ENCODE measurements at regions of chr7 and their contacts with region 1.

Region 1: DNA sequence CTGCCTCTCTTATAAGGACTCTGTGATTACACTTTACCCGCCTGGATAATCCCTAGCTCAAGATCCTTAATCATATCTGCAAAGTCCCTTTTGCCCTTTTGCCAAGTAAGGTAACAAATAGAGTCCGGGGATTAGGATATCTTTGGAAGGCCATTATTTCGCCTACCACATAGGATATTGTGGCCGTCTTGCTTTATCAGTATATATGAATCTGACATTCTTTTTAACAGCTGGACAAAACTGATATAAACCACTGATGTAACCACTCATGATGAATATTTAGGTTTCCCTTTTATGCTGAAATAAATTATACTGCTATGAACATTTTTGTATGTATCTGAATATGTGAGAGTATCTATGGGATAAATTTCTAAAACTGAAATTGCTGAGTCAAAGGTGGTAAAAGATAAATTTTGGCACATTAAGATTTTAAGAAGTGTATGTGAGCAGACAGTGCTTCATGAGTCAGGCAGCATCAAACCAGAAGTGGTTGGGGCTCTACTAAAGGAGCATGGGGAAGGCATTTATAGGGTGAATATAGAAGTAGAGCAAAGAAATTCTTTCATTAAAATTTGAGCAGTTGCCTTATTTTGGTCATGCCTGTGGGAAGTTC is 44.7 kb downstream of the AVL9 start:
- DNase-seq: no peak
- H3K4me3 ChIP-seq: no peak overlapping the region
- H3K27ac ChIP-seq: 0 out of 2 replicates have a peak overlapping the region, but pooled peaks have one; percentile 1
- H3K4me1 ChIP-seq: no peaks in the 10 kb centered on the region
- H3K27me3 ChIP-seq: no peaks in the 10 kb centered on the region
- CTCF ChIP-seq: no peak

Region 2: DNA sequence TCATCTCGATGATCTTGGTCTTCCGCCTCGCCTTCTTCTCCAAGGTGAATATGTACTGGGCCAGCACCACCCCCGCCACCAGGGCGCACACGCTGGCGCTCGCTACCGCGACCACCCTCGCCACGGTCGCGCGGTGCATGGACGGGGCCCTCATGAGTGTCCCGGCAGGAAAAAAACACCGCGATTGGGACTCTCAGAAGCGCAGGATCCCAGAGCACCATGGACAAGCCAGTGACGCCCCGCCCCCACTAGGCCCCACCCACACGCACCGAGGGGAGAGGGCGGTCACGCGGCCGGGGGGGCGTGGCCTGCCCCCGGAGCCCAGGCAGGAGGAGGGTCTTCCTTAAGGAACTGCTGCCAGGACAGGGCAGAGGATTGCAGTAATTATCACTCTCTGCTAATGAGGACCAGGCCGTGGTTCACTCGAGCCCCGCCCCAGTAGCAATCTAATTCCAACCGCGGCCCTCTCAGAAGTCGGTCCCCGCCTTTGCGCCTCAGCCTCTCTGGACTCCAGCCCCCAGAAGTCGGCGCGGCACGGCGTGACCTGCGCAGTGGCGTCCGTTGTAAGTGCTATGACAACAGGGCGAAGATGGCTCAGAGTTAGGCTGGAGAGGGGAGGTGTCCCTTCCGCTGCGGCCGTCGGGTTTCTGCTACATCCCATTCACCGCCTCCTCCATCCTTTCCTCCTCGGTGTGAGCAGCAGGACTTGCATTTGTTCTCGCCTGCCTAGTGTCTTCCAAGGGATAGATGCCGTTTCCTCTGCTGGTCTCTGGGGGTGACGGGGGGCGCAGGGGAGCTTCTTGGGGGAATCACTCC is 589.2 kb after region 1 on chr7 and contains the start of gene BBS9:
- CTCF ChIA-PET with region 1: no interaction called
- POLR2A ChIA-PET with region 1: interaction called, 13 read pairs
- intact Hi-C with region 1: no loop called
- DNase-seq: peak; percentile 92 to 95
- H3K4me3 ChIP-seq: peak within 1 kb of the TSS; percentile 58
- H3K27ac ChIP-seq: no peak within 1 kb of the TSS
- H3K4me1 ChIP-seq: peaks cover 9% of the 10 kb centered on the region; the same call in 1 of the 2 replicates
- H3K27me3 ChIP-seq: no peaks in the 10 kb centered on the region
- CTCF ChIP-seq: no peak
- total RNA-seq, gene BBS9: 12.4 and 13.1 TPM in 2 replicates

Measured in PC-9 (cell line).